Heart left ventricle (tissue), 16 donors: ENCODE measurements at regions of chr19 and their contacts with region 1.

Region 1: DNA sequence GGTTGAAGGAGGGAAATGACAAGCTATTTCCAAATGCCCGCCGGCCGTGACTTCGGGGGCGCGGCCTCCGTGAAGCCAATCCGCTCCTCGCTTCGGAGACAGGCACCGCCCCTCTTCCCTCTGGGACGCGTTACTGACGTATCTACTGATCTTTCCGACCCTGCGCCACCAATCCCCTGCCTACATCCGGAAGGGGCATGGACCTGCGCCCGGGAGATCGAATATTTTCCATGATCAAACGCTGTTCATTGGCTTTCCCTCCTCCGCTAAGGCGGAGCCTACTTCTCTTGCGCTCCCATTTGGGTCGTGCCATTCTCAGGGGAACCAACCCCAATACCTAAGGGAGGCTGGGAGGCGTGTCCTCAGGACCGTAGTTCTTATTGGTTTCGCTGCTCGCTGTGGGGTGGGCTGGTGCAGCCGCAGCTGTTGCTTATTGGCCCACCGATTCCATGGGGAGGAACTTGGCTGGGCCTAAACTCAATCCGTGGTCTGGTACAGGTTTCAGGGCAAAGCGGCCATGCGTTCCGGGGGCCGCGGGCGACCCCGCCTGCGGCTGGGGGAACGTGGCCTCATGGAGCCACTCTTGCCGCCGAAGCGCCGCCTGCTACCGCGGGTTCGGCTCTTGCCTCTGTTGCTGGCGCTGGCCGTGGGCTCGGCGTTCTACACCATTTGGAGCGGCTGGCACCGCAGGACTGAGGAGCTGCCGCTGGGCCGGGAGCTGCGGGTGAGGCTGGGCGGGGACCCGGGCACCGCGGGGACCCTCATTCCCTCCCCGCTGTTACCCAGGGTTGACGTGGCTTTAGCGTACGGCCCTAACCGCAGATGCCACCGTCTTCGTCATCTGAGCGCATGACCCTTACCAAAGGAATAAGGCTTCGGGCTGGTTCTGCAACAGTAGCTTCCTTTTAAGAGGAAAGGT is at the start of gene QPCTL:
- DNase-seq: peak; percentile 95 to 98 (median 96)
- ATAC-seq: peak; percentile 94 to 96 (median 96)
- H3K4me3 ChIP-seq: peak within 1 kb of the TSS; percentile 43 to 89 (median 77)
- H3K27ac ChIP-seq: peak within 1 kb of the TSS; percentile 73 to 95 (median 84)
- H3K4me1 ChIP-seq: peaks cover 0 to 22% (median 8%) of the 10 kb centered on the region in 12 donors
- H3K27me3 ChIP-seq: no peaks in the 10 kb centered on the region
- CTCF ChIP-seq: no peak
- POLR2A ChIP-seq: peak in 1 of 2 donors; percentile 74
- total RNA-seq, gene QPCTL: 1.5 to 5.5 (median 2.8) TPM

Region 2: DNA sequence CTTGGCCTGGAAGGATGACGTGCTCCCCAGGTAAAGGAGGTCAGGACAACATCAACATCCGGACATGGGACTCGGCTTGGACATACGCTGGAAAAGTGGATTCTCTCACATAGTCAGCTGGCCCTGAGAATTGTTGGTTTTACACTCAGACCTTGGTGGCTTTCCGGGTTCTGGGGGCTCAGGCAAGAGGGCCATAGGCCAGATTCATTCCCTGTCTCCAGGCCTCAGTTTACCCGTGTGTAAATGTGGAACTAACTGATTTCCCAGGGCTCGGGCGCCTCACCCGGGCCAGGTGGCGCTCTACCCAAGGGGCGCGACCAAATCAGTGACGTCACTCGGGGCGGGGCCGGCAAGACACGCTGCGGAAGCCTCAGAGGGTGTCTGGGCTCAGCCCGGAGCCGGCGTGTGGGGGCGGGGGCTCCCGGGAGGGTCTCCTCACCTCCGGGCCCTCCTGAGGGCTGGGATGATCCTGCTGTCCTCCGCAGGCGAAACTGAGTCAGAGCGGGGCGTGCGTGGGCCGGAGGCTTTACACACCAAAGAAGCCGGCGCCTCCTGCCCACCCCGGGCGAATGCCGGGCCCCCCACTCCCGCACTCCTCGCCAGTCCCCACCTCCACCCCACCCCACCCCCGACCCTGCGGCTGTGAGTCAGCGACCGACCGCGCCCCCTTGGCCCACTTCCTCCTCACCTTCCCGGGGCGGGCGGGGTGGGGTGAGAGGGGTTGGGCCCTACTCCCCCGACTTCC is 186.0 kb before region 1 on chr19:
- intact Hi-C with region 1: loop called in 1 of 10 experiments (anchors 5 kb)
- DNase-seq: peak; percentile 95 to 98 (median 97)
- ATAC-seq: peak; percentile 71 to 86 (median 82)
- H3K4me3 ChIP-seq: peak overlapping the region; percentile 78 to 100 (median 96)
- H3K27ac ChIP-seq: peak overlapping the region; percentile 84 to 99 (median 96)
- H3K4me1 ChIP-seq: peaks cover 0 to 50% (median 19%) of the 10 kb centered on the region in 12 donors
- H3K27me3 ChIP-seq: no peaks in the 10 kb centered on the region
- CTCF ChIP-seq: peak in 11 of 12 donors; percentile 17 to 75 (median 50)
- POLR2A ChIP-seq: peak; percentile 65 to 78

Region 3: GRCh38 chr19:45711851-45712698 is 19.6 kb after region 1 on chr19:
- intact Hi-C with region 1: loop called in 5 of 10 experiments (anchors 2 kb)
- DNase-seq: peak in 1 of 5 donors; percentile 28
- ATAC-seq: no peak
- H3K4me3 ChIP-seq: no peak overlapping the region
- H3K27ac ChIP-seq: peak overlapping the region in 1 of 12 donors; percentile 55
- H3K4me1 ChIP-seq: peaks cover 0 to 24% (median 10%) of the 10 kb centered on the region in 12 donors
- H3K27me3 ChIP-seq: no peaks in the 10 kb centered on the region
- CTCF ChIP-seq: no peak
- POLR2A ChIP-seq: no peak

Region 4: DNA sequence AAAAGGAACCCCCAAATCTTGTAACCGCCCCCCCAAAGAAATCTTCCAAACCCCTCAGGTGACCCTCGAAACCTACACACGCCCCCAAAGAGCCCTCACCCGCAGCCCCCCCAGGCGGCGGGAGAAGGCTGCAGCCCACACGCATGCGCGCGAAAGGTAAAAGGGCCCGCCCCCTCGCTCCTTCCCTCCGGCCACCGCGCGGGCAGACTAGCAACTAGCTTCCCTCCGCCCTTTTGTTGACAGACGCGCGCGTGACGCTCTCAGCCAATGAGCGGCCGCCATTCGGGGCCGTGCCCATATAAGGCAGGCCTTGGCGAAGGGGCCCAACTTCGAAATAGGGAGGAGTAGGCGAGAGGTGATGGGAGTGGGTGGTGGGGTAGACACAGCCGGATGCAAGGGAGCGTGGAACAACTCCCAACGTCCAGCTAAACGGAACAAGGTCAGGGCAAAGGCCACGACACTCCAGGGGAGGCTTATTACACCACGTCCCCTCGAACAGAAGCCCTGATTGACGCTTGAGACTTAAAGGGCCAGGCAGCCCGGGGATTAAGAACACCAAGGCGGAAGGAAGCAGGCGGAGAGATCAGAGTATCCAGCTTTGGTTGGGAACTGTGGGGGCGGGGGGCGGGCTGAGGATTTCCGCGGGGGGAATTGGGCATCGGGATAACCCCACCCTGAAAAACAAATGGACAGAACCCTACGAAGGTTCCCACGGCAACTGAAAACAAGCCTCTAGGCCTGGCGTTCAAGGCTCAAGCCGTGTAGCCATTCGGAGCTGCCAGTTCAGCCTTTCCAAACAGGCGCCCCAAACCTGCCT is 24.9 kb after region 1 on chr19:
- intact Hi-C with region 1: loop called in 5 of 10 experiments (anchors 2 kb)
- DNase-seq: peak; percentile 99 to 100 (median 99)
- ATAC-seq: peak; percentile 97 to 98 (median 98)
- H3K4me3 ChIP-seq: peak overlapping the region; percentile 47 to 77 (median 68)
- H3K27ac ChIP-seq: peak overlapping the region; percentile 78 to 96 (median 94)
- H3K4me1 ChIP-seq: peaks cover 0 to 38% (median 16%) of the 10 kb centered on the region in 12 donors
- H3K27me3 ChIP-seq: no peaks in the 10 kb centered on the region
- CTCF ChIP-seq: peak in 7 of 12 donors; percentile 8 to 38 (median 19)
- POLR2A ChIP-seq: peak in 1 of 2 donors; percentile 43

Region 5: DNA sequence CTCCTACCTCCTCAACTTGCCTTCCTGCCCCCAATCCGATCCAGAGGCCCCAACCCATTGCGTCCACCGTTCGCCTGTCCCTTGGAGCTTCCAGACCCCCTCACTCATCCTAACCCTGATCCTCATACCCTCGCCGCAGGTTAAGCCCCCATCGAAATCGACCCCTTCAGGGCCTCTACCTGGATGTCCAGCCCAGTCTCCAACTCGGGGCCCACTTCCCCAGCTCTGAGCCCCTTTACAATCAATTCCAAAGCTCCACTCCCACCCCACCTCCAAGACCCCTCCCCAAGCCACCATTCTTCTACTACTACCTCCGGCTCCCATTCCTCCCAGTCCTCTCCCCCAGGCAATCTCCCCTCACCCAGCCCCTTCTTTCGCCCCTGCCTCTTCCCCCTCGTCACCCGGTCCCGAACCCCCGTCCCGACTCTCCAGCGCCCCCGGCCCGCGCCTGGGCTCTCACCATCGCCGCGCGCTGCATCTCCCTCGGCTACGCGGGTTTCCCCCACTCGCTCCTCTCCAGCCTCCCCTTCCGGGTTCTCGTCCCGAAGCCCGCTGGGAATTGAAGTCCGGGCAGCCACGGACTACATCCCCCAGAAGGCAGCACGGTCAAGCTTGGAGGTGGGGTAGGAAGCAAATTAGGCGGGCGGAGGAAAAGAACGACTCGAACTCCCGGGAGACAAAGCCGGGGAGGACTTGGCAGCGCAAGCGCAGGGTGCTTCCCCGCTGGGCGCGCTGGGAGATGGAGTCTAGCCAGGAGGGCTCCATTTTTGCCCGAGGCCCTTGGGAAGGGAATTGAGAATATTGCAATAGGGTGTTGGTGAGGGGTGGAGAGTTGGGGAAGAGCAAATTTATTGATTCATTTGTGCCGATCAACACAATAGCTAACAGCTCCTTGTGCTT is 38.2 kb after region 1 on chr19 and contains the start of gene FBXO46:
- intact Hi-C with region 1: loop called in 1 of 10 experiments (anchors 5 kb)
- DNase-seq: peak; percentile 97 to 99 (median 98)
- ATAC-seq: peak; percentile 98 to 99 (median 99)
- H3K4me3 ChIP-seq: peak within 1 kb of the TSS; percentile 66 to 93 (median 80)
- H3K27ac ChIP-seq: peak within 1 kb of the TSS in 11 of 12 donors; percentile 57 to 84 (median 62)
- H3K4me1 ChIP-seq: peaks cover 0 to 22% (median 12%) of the 10 kb centered on the region in 12 donors
- H3K27me3 ChIP-seq: no peaks in the 10 kb centered on the region
- CTCF ChIP-seq: no peak
- POLR2A ChIP-seq: peak in 1 of 2 donors; percentile 73
- total RNA-seq, gene FBXO46: 9.1 to 17.8 (median 10.3) TPM

Region 6: DNA sequence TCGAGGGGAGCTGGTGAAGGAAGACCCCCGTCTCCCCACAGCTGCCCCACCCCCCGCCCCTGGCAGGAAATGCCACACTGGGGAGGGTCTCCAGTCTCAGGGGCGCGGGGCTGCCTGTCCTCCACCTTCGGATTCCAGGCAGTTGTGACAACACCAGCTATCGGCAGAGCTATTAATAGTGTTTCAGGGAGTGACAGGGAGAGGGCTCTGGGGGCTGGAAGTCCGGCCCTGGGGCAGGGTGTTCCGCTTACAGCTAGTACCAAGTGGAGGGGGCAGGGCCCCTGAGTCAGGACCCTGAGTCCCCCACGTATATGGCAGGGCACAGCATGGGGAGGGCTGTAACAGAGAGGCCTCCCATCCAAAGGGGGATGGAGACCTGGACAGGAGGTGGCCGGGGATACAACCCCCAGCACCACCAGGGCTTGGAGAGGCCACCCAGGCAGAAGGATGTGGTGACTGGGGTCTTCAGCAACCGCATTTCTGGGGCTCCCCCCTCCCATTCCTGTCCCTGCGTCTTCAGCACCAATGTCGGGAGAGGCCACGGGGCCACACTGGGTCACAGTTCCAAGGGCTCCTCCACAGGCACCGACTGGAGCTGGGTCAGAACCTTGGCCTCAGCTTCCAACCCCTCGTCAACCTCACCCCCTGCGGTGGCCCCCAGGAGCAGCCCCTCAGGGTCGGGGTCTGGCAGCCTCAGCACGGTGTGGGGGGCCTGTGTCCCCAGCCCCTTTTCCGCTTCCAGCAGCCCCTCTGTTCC is 72.7 kb after region 1 on chr19:
- intact Hi-C with region 1: loop called in 5 of 10 experiments (anchors 1 to 5 kb)
- DNase-seq: peak; percentile 64 to 86 (median 68)
- ATAC-seq: peak; percentile 16 to 48 (median 32)
- H3K4me3 ChIP-seq: peak overlapping the region in 8 of 12 donors; percentile 12 to 85 (median 40)
- H3K27ac ChIP-seq: peak overlapping the region; percentile 86 to 99 (median 97)
- H3K4me1 ChIP-seq: peaks cover 10 to 53% (median 42%) of the 10 kb centered on the region in 12 donors
- H3K27me3 ChIP-seq: peaks cover 0 to 35% (median 0%) of the 10 kb centered on the region in 9 donors
- CTCF ChIP-seq: no peak
- POLR2A ChIP-seq: peak; percentile 10 to 66